Activated T-helper 1 cell treated with anti-CD3 and anti-CD28 coated beads, Interleukin-12 subunit alpha, Interleukin-12 subunit beta, Interleukin-2, Interleukin-4 antibody, amounts not matched to agents 30 ng/mL and 10 ng/mL and 1 ng/mL, durations not matched to agents 14 hours and 24 hours and 36 hours (primary cell): ENCODE measurements at regions of chr14 and their contacts with region 1.

Region 1: DNA sequence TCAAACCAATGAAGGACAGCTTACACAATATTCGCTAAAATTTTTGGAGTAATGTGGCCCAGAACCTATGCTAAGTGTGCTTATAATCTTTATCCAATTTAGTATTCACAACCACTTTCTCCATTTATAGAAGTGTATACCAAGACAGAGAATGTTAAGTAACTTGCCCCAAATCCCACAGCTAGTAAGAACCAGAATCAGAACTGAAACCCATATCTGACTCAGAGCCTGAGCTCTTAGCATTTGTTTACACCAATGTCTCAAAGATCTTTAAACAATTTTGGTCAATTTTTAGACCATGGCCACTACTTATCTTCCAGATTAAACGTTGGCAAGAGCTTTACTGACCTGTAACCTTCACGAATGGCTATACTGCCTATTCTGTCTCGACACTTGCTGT is 53.0 kb downstream of the PAPLN start:
- DNase-seq: no peak
- H3K4me3 Mint-ChIP-seq: peak overlapping the region; percentile 25
- H3K27ac Mint-ChIP-seq: peak overlapping the region; percentile 63
- H3K4me1 Mint-ChIP-seq: peaks cover 49% of the 10 kb centered on the region
- H3K27me3 Mint-ChIP-seq: no peaks in the 10 kb centered on the region

Region 2: DNA sequence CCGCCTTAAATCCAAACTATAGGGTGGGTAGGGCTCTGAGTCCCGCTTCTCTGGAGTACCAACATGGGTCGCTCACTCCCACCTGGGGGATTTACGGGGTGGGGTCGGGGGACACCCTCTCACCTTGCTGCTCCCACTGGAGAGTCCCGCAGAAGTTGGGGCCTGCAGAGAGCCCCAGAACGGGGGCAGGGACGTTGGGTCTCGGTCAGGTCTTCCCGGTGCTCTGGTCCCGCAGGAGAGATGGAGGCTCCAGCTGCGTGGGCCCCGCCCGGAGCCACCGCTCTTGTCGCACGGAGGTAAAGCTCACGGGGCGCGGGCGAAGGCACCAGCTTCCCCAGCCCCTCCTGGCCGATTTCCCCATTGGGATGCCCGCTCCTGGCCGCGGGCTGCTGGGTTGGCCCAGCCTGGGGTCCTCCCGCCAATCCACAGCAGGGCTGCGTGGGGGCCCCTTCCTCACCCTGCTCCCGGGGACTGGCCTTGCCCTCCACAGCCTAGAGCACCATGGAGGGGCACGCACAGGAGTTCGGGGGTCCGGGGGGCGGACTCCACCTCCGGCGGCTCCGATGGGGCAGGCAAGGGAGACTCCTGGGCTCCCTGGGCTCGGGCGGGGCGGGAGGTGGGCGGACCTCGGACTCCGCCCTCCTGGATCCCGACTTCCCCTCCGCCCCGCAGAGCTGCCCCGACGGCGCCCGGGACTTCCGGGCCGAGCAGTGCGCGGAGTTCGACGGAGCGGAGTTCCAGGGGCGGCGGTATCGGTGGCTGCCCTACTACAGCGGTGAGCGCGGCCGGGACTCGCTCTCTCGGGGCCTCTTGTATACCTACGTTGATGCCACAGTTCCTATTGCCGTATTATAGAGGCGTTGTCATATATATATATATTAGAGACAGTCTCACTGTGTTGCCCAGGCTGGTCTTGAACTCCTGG is 44.6 kb before region 1 on chr14:
- intact Hi-C with region 1: loop called (anchors 5 kb)
- DNase-seq: peak; percentile 36
- H3K4me3 Mint-ChIP-seq: peak overlapping the region; percentile 73
- H3K27ac Mint-ChIP-seq: no peak overlapping the region
- H3K4me1 Mint-ChIP-seq: peaks cover 41% of the 10 kb centered on the region
- H3K27me3 Mint-ChIP-seq: peaks cover 40% of the 10 kb centered on the region

Region 3: DNA sequence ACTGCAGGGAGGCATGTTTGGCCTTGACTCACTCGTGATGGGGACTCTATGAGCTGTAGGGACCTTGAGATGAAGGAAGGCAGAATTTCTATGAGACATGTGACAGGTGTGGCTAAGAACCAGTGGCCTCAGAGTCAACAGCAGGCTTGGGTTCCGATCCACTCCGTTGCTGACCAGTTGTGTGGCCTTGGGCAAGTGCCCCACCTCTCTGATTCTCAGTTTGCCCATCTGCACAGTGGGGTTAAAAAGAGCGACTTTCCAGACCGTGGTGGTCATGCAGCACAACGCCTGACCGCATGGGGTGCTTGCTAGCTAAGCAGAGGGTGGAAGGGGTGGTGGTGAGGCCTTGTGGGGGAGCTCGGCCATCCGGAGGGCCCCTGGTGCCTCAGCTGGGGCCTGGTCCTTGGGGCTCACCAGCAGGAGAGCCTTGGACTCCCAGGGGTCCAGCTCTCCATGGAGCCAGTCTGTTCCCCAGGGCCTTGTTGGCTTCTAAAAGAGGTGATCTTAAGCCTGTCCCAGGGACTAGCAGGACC is 34.5 kb before region 1 on chr14:
- intact Hi-C with region 1: no loop called
- DNase-seq: no peak
- H3K4me3 Mint-ChIP-seq: no peak overlapping the region
- H3K27ac Mint-ChIP-seq: no peak overlapping the region
- H3K4me1 Mint-ChIP-seq: no peaks in the 10 kb centered on the region
- H3K27me3 Mint-ChIP-seq: no peaks in the 10 kb centered on the region

Region 4: DNA sequence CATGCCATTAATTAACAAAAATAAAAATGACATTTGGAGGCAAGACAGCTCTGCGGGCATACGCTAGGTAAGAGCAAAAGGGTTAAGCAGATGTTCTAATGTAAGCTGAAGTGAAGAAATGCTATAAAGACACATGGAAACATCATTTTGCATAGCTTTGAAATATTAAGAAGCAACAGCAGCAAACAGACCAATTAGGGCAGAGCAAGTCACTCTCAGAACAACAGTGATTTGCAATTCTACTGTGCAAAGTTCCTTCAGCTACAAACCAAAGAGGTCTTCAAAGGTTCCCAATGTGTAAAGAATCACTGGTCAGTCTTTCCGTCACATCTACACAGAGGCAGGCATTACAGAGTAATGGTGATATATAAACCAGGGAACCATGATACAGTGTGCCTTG is 15.2 kb after region 1 on chr14:
- intact Hi-C with region 1: no loop called
- DNase-seq: no peak
- H3K4me3 Mint-ChIP-seq: no peak overlapping the region
- H3K27ac Mint-ChIP-seq: no peak overlapping the region
- H3K4me1 Mint-ChIP-seq: no peaks in the 10 kb centered on the region
- H3K27me3 Mint-ChIP-seq: no peaks in the 10 kb centered on the region

Region 5: GRCh38 chr14:73372529-73372928 is 82.2 kb after region 1 on chr14:
- intact Hi-C with region 1: loop called (anchors 5 kb)
- DNase-seq: no peak
- H3K4me3 Mint-ChIP-seq: no peak overlapping the region
- H3K27ac Mint-ChIP-seq: no peak overlapping the region
- H3K4me1 Mint-ChIP-seq: peaks cover 6% of the 10 kb centered on the region
- H3K27me3 Mint-ChIP-seq: no peaks in the 10 kb centered on the region

Region 6: GRCh38 chr14:73463411-73463810 is 173.1 kb after region 1 on chr14:
- intact Hi-C with region 1: loop called (anchors 1 kb)
- DNase-seq: peak; percentile 43
- H3K4me3 Mint-ChIP-seq: peak overlapping the region; percentile 57
- H3K27ac Mint-ChIP-seq: peak overlapping the region; percentile 91
- H3K4me1 Mint-ChIP-seq: peaks cover 78% of the 10 kb centered on the region
- H3K27me3 Mint-ChIP-seq: no peaks in the 10 kb centered on the region

Region 7: GRCh38 chr14:74571901-74572725 is 1281.8 kb after region 1 on chr14:
- intact Hi-C with region 1: loop called (anchors 5 kb)
- DNase-seq: no peak
- H3K4me3 Mint-ChIP-seq: peak overlapping the region; percentile 24
- H3K27ac Mint-ChIP-seq: peak overlapping the region; percentile 46
- H3K4me1 Mint-ChIP-seq: peaks cover 39% of the 10 kb centered on the region
- H3K27me3 Mint-ChIP-seq: peaks cover 4% of the 10 kb centered on the region